ENCODE measurements at regions of chr2 and their contacts with region 1.

Region 1: DNA sequence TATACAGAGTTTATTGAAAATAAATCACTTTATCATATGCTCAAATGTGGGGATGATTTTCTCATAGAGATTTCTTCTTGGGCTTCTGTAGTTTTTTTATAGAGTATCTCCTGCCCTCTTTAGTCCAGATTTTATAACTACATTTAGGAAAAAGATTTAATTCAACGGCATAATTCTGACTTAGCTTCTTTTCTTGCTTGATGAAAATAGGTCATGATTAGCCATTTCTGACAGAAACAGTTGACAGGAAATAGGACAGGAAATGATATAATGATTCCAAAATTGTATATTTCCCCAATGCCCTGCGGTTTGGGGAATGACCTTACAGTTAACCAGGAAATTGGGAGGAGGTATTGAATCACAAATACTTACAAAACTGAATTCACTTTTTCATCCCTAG is 1531.9 kb upstream of the ACVR2A start:
- DNase-seq: peak; percentile 48
- ATAC-seq: peak; percentile 65; the same call in 1 of the 2 replicates
- H3K4me3 ChIP-seq: no peak overlapping the region
- H3K27ac ChIP-seq: no peak overlapping the region; the same call in 1 of the 2 replicates
- H3K4me1 ChIP-seq: peaks cover 4% of the 10 kb centered on the region
- H3K27me3 ChIP-seq: no peaks in the 10 kb centered on the region
- CTCF ChIP-seq: peak; percentile 50
- POLR2A ChIP-seq: no peak
- RAD21 ChIP-seq: peak; percentile 53

Region 2: GRCh38 chr2:145652571-145653545 is 660.0 kb before region 1 on chr2:
- CTCF ChIA-PET with region 1: no interaction called
- POLR2A ChIA-PET with region 1: no interaction called
- dilution Hi-C with region 1: no loop called
- in situ Hi-C with region 1: no loop called
- intact Hi-C with region 1: loop called (anchors 5 kb)
- DNase-seq: peak; percentile 95
- ATAC-seq: peak; percentile 66
- H3K4me3 ChIP-seq: no peak overlapping the region
- H3K27ac ChIP-seq: peak overlapping the region; percentile 42; the same call in 1 of the 2 replicates
- H3K4me1 ChIP-seq: no peaks in the 10 kb centered on the region; the same call in 1 of the 2 replicates
- H3K27me3 ChIP-seq: no peaks in the 10 kb centered on the region
- CTCF ChIP-seq: no peak
- POLR2A ChIP-seq: no peak
- RAD21 ChIP-seq: no peak

Region 3: GRCh38 chr2:145760781-145761649 is 551.9 kb before region 1 on chr2:
- CTCF ChIA-PET with region 1: no interaction called
- POLR2A ChIA-PET with region 1: no interaction called
- dilution Hi-C with region 1: no loop called
- in situ Hi-C with region 1: no loop called
- intact Hi-C with region 1: loop called (anchors 2 kb)
- DNase-seq: peak; percentile 79
- ATAC-seq: peak; percentile 63
- H3K4me3 ChIP-seq: no peak overlapping the region
- H3K27ac ChIP-seq: peak overlapping the region; percentile 86; the same call in 1 of the 2 replicates
- H3K4me1 ChIP-seq: peaks cover 12% of the 10 kb centered on the region
- H3K27me3 ChIP-seq: no peaks in the 10 kb centered on the region
- CTCF ChIP-seq: no peak
- POLR2A ChIP-seq: no peak
- RAD21 ChIP-seq: no peak

Region 4: DNA sequence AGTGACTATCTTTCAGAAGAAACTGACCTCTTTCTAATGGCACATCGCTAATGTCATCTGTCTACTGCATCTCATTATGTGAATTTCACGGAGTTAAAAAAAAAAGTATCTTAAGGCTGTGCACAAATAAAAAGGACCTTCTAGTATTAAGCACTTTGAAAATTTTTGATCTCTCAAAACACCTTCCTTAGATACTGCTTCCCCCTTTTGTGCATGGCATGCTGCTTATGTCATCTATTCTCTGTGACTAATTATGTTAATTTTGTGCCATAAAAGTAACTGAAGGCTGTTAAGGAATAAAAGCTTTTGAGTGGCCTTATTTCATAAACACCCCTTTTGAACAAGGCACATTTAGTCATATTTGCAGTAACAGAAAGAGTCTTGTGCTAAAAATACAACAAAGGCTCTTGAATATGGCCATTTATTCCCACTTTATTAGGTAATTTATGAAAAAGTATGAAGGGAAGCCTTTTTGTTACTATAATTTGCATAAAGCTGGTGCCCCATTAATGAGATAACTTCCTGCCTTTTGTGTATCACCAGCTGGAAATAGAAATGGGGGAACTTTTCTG is 381.0 kb before region 1 on chr2:
- CTCF ChIA-PET with region 1: no interaction called
- POLR2A ChIA-PET with region 1: no interaction called
- dilution Hi-C with region 1: no loop called
- in situ Hi-C with region 1: no loop called
- intact Hi-C with region 1: loop called (anchors 5 kb)
- DNase-seq: no peak
- ATAC-seq: no peak
- H3K4me3 ChIP-seq: no peak overlapping the region
- H3K27ac ChIP-seq: no peak overlapping the region
- H3K4me1 ChIP-seq: no peaks in the 10 kb centered on the region
- H3K27me3 ChIP-seq: no peaks in the 10 kb centered on the region
- CTCF ChIP-seq: no peak
- POLR2A ChIP-seq: no peak
- RAD21 ChIP-seq: no peak

Region 5: GRCh38 chr2:146004462-146004861 is 308.4 kb before region 1 on chr2:
- CTCF ChIA-PET with region 1: no interaction called
- POLR2A ChIA-PET with region 1: no interaction called
- dilution Hi-C with region 1: no loop called
- in situ Hi-C with region 1: no loop called
- intact Hi-C with region 1: loop called (anchors 10 kb)
- DNase-seq: peak; percentile 70
- ATAC-seq: no peak
- H3K4me3 ChIP-seq: no peak overlapping the region
- H3K27ac ChIP-seq: no peak overlapping the region
- H3K4me1 ChIP-seq: no peaks in the 10 kb centered on the region
- H3K27me3 ChIP-seq: no peaks in the 10 kb centered on the region
- CTCF ChIP-seq: no peak
- POLR2A ChIP-seq: no peak
- RAD21 ChIP-seq: no peak

Measured in IMR-90 (cell line).